ENCODE measurements at regions of chr11 and their contacts with region 1.

Region 1: DNA sequence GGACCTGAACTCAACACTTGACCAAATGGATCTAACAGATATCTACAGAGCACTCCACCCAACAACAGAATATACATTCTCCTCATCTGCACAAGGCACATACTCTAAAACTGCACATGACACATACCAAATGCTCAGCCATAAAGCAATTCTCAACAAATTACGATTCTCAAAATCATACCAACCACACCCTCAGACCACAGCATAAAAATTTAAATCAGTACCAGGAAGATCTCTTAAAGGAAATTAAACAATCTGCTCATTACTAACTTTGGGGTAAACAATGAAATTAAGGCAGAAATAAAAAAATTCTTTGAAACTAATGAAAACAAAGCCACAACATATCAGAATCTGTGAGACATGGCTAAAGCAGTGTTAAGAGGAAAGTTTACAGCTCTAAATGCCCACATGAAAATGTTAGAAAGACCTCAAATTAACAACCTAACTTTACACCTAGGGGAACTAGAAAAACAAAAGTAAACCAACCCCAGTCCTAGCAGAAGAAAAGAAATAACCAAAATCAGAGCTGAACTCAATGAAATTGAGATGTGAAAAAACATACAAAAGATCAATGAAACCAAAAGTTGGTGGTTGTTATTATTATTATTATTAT is 37.2 kb downstream of the TMEM123 start:
- DNase-seq: no peak
- ATAC-seq: no peak
- H3K4me3 Mint-ChIP-seq: peak overlapping the region; percentile 1
- H3K27ac Mint-ChIP-seq: peak overlapping the region; percentile 5
- H3K4me1 Mint-ChIP-seq: peaks cover 63% of the 10 kb centered on the region
- H3K27me3 Mint-ChIP-seq: no peaks in the 10 kb centered on the region
- CTCF ChIP-seq: no peak

Region 2: GRCh38 chr11:102399189-102399588 is 16.2 kb before region 1 on chr11:
- CTCF ChIA-PET with region 1: no interaction called
- POLR2A ChIA-PET with region 1: no interaction called
- intact Hi-C with region 1: loop called (anchors 2 kb)
- DNase-seq: no peak
- ATAC-seq: no peak
- H3K4me3 Mint-ChIP-seq: no peak overlapping the region
- H3K27ac Mint-ChIP-seq: no peak overlapping the region
- H3K4me1 Mint-ChIP-seq: peaks cover 21% of the 10 kb centered on the region
- H3K27me3 Mint-ChIP-seq: no peaks in the 10 kb centered on the region
- CTCF ChIP-seq: no peak

Region 3: GRCh38 chr11:102430158-102430836 is 14.9 kb after region 1 on chr11:
- CTCF ChIA-PET with region 1: interaction called, 3 read pairs
- POLR2A ChIA-PET with region 1: interaction called, 3 read pairs
- intact Hi-C with region 1: loop called (anchors 2 kb)
- DNase-seq: no peak
- ATAC-seq: peak; percentile 84
- H3K4me3 Mint-ChIP-seq: peak overlapping the region; percentile 39
- H3K27ac Mint-ChIP-seq: peak overlapping the region; percentile 72
- H3K4me1 Mint-ChIP-seq: peaks cover 56% of the 10 kb centered on the region
- H3K27me3 Mint-ChIP-seq: no peaks in the 10 kb centered on the region
- CTCF ChIP-seq: no peak

Region 4: GRCh38 chr11:102868339-102868738 is 452.9 kb after region 1 on chr11:
- CTCF ChIA-PET with region 1: no interaction called
- POLR2A ChIA-PET with region 1: no interaction called
- intact Hi-C with region 1: no loop called
- DNase-seq: no peak
- ATAC-seq: no peak
- H3K4me3 Mint-ChIP-seq: no peak overlapping the region
- H3K27ac Mint-ChIP-seq: no peak overlapping the region
- H3K4me1 Mint-ChIP-seq: no peaks in the 10 kb centered on the region
- H3K27me3 Mint-ChIP-seq: peaks cover 5% of the 10 kb centered on the region
- CTCF ChIP-seq: no peak